ENCODE measurements at regions of chr12 and their contacts with region 1.

Region 1: GRCh38 chr12:66119870-66120241 is 10.7 kb downstream of the LLPH start:
- DNase-seq: no peak
- H3K4me3 ChIP-seq: no peak overlapping the region
- H3K27ac ChIP-seq: no peak overlapping the region
- H3K27me3 ChIP-seq: no peaks in the 10 kb centered on the region
- CTCF ChIP-seq: no peak

Region 2: GRCh38 chr12:66107451-66107915 is 12.4 kb before region 1 on chr12:
- CTCF ChIA-PET with region 1: interaction called, 13 read pairs
- POLR2A ChIA-PET with region 1: no interaction called
- DNase-seq: peak; percentile 88
- H3K4me3 ChIP-seq: no peak overlapping the region
- H3K27ac ChIP-seq: no peak overlapping the region
- H3K27me3 ChIP-seq: no peaks in the 10 kb centered on the region
- CTCF ChIP-seq: peak; percentile 80

Region 3: GRCh38 chr12:66799551-66799950 is 679.7 kb after region 1 on chr12:
- CTCF ChIA-PET with region 1: no interaction called
- POLR2A ChIA-PET with region 1: no interaction called
- DNase-seq: no peak
- H3K4me3 ChIP-seq: no peak overlapping the region
- H3K27ac ChIP-seq: no peak overlapping the region
- H3K27me3 ChIP-seq: no peaks in the 10 kb centered on the region
- CTCF ChIP-seq: no peak